PC-9 (cell line): ENCODE measurements at regions of chr1 and their contacts with region 1.

Region 1: DNA sequence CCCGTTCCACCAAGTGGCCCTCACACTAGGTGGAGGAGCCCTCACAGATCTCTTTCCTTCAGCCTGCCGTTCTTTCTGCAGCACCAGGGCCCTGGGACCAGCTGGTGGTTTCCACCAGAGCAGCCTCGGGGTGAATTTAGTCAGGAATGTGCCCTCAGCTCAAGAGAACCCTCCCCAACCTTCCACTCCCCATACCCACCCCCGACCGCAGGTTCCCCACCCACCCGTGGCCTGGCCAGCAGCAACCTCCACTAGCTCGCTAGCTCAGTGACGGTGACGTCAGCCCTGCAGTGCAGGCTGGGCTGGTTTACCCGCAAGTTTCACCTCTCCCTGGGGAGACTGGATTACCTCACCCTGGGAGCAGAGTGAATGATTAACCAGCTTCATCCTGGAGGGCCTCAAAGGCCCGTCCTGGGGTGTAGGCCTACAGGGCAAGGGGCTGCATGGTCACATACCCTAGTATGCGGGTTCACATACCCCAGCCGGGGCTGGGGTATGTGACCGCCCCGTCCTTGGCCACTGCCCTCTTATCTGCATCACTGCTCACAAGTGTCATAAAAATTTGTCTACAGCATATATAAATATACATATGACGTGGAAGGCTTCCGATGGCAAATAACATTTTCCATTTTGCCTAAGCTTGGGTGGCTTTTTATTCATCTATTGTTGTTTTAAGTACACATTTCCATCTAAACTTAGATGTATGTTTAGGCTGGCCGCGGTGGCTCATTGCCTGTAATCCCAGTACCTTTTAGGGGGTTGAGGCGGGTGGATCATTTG is 24.5 kb downstream of the ELF3 start:
- DNase-seq: peak; percentile 98
- H3K4me3 ChIP-seq: peak overlapping the region; percentile 26; the same call in 1 of the 2 replicates
- H3K27ac ChIP-seq: peak overlapping the region; percentile 89
- H3K4me1 ChIP-seq: peaks cover 68% of the 10 kb centered on the region
- H3K27me3 ChIP-seq: no peaks in the 10 kb centered on the region
- CTCF ChIP-seq: no peak

Region 2: GRCh38 chr1:201268604-201269151 is 766.2 kb before region 1 on chr1:
- CTCF ChIA-PET with region 1: no interaction called
- POLR2A ChIA-PET with region 1: interaction called, 11 read pairs
- intact Hi-C with region 1: no loop called
- DNase-seq: no peak
- H3K4me3 ChIP-seq: no peak overlapping the region
- H3K27ac ChIP-seq: peak overlapping the region; percentile 87
- H3K4me1 ChIP-seq: peaks cover 41% of the 10 kb centered on the region
- H3K27me3 ChIP-seq: no peaks in the 10 kb centered on the region
- CTCF ChIP-seq: no peak

Region 3: DNA sequence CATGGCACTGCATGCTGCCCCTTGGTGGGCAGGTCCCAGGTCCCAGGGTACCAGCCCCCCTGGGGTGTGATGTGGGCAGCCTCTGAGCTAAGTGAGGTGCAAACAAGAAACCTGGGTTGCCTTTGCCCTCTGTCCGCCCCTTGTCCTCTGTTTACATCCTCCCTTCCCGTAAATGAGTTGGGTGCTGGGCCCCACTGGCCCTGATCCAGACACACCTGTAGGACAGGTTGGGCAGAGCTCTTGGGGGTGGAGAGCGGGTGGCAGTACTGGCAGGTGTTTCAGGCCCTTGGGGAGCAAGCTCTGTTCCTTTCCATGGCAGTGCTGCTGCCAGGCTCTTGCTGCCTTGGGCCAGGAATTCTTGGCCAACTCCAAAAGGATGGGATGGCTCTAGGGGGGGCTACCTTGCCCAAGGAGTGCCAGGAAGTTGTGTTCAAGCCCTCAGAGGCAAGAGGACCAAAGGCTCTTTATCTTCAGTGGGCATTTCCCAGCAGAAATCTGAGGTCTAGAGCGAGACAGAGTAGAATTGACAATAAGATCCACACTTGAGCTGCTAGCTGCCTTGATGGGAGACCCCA is 11.4 kb after region 1 on chr1:
- CTCF ChIA-PET with region 1: interaction called, 13 read pairs
- POLR2A ChIA-PET with region 1: interaction called, 60 read pairs
- intact Hi-C with region 1: loop called (anchors 1 kb)
- DNase-seq: peak; percentile 95 to 97
- H3K4me3 ChIP-seq: peak overlapping the region; percentile 24; the same call in 1 of the 2 replicates
- H3K27ac ChIP-seq: peak overlapping the region; percentile 98
- H3K4me1 ChIP-seq: peaks cover 77% of the 10 kb centered on the region
- H3K27me3 ChIP-seq: no peaks in the 10 kb centered on the region
- CTCF ChIP-seq: no peak

Region 4: GRCh38 chr1:202105539-202106276 is 70.8 kb after region 1 on chr1:
- CTCF ChIA-PET with region 1: no interaction called
- POLR2A ChIA-PET with region 1: interaction called, 31 read pairs
- intact Hi-C with region 1: loop called (anchors 1 kb)
- DNase-seq: peak; percentile 91 to 95
- H3K4me3 ChIP-seq: peak overlapping the region; percentile 26; the same call in 1 of the 2 replicates
- H3K27ac ChIP-seq: peak overlapping the region; percentile 99
- H3K4me1 ChIP-seq: peaks cover 76% of the 10 kb centered on the region
- H3K27me3 ChIP-seq: no peaks in the 10 kb centered on the region
- CTCF ChIP-seq: no peak

Region 5: GRCh38 chr1:202112839-202113672 is 78.2 kb after region 1 on chr1:
- CTCF ChIA-PET with region 1: interaction called, 4 read pairs
- POLR2A ChIA-PET with region 1: interaction called, 16 read pairs
- intact Hi-C with region 1: no loop called
- DNase-seq: peak; percentile 67 to 86
- H3K4me3 ChIP-seq: peak overlapping the region; percentile 23; the same call in 1 of the 2 replicates
- H3K27ac ChIP-seq: peak overlapping the region; percentile 97
- H3K4me1 ChIP-seq: peaks cover 92% of the 10 kb centered on the region
- H3K27me3 ChIP-seq: no peaks in the 10 kb centered on the region
- CTCF ChIP-seq: no peak